ENCODE measurements at regions of chr11 and their contacts with region 1.

Region 1: GRCh38 chr11:120335908-120336640 is at the start of gene ARHGEF12:
- DNase-seq: peak; percentile 97
- H3K4me3 ChIP-seq: peak within 1 kb of the TSS; percentile 87
- H3K27ac ChIP-seq: peak within 1 kb of the TSS; percentile 90
- H3K27me3 ChIP-seq: no peaks in the 10 kb centered on the region
- CTCF ChIP-seq: peak; percentile 47
- polyA plus RNA-seq, gene ARHGEF12: 62.7 and 64.8 TPM in 2 replicates

Region 2: DNA sequence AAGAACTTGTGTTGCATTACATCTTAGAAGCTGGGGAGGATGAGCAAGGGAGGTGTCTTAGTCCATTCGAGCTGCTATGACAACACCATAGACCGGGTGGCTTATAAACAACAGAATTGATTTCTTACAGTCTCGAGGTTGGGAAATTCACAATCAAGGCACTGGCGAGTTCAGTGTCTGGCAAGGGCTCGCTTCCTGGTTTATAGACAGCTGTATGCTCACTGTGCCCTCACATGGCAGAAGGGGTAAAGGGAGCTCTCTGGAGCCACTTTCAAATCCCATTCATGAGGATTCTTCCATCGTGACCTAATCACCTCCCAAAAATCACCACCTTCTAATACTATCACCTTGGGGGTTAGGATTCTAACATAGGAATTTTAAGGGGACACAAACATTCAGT is 457.1 kb before region 1 on chr11:
- CTCF ChIA-PET with region 1: no interaction called
- POLR2A ChIA-PET with region 1: no interaction called
- DNase-seq: no peak
- H3K4me3 ChIP-seq: no peak overlapping the region
- H3K27ac ChIP-seq: no peak overlapping the region
- H3K27me3 ChIP-seq: peaks cover 14% of the 10 kb centered on the region
- CTCF ChIP-seq: no peak

Region 3: DNA sequence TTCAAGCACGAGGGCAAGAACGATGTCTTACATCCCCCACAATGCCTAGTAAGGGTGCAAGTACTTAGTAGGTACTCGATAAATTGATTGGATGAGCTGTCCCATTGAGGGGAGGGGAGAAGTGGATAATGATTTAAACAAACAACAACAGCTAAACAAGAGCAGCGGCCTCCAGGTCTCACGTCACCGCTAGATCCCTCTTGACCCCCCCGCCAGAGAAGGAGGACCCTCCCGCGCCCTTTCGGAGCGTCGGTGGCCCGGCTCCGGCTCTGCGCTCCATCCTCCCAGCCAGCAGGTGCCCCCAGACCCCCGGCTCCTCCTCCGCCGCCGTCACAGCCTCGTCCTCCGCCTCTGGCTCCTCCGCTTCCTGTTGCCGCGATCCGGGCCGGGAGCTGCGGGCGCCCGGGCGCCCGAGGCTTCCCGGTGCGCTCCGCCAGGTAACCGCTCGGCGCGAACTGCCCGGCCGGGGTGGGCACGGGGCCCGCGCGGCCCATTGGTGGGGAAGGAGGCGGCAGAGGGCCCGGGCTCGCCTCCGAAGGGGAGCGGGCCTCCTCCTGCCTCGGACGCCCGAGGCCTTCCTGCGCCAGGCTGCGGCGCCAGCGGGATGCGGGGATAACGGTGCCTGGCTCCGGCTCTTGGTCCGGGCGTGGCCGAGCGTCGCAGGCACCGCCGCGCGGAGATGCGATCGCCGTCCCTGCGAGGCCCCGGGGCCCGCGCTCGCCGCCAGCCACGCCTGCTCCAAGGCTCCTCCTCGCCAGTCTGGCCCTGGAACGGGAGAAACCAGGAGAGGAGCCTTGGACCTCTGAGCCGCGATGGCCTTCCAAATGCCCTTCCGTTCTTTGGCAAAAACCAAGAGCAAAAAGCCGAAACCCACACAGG is 10.9 kb before region 1 on chr11 and contains the start of gene TLCD5:
- CTCF ChIA-PET with region 1: interaction called, 23 read pairs
- POLR2A ChIA-PET with region 1: interaction called, 3 read pairs
- DNase-seq: no peak
- H3K4me3 ChIP-seq: peak within 1 kb of the TSS; percentile 70
- H3K27ac ChIP-seq: peak within 1 kb of the TSS; percentile 83
- H3K27me3 ChIP-seq: no peaks in the 10 kb centered on the region
- CTCF ChIP-seq: peak; percentile 15; the same call in 1 of the 2 replicates
- polyA plus RNA-seq, gene TLCD5: 13.6 and 14.9 TPM in 2 replicates

Region 4: DNA sequence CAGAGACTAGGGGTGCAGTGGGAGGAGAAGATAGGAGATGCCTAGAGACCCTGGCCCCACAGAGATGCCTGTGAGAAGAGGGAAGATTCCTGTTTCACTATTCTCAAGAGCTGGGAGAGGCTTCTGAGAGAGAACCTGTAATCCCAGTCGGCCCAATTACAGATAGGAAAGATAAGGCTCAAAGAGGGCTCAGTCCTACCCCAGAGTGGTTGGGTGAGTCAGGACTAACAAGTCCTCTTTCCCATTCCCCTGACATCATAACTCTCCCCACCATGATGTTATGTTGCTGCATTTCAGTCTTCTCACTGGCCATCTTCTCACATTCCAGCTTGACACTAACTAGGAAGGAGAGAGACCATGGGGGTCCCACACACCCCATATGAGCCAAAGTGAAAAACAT is 18.0 kb after region 1 on chr11:
- CTCF ChIA-PET with region 1: interaction called, 10 read pairs
- POLR2A ChIA-PET with region 1: interaction called, 4 read pairs
- DNase-seq: no peak
- H3K4me3 ChIP-seq: no peak overlapping the region
- H3K27ac ChIP-seq: no peak overlapping the region
- H3K27me3 ChIP-seq: no peaks in the 10 kb centered on the region
- CTCF ChIP-seq: no peak

Region 5: DNA sequence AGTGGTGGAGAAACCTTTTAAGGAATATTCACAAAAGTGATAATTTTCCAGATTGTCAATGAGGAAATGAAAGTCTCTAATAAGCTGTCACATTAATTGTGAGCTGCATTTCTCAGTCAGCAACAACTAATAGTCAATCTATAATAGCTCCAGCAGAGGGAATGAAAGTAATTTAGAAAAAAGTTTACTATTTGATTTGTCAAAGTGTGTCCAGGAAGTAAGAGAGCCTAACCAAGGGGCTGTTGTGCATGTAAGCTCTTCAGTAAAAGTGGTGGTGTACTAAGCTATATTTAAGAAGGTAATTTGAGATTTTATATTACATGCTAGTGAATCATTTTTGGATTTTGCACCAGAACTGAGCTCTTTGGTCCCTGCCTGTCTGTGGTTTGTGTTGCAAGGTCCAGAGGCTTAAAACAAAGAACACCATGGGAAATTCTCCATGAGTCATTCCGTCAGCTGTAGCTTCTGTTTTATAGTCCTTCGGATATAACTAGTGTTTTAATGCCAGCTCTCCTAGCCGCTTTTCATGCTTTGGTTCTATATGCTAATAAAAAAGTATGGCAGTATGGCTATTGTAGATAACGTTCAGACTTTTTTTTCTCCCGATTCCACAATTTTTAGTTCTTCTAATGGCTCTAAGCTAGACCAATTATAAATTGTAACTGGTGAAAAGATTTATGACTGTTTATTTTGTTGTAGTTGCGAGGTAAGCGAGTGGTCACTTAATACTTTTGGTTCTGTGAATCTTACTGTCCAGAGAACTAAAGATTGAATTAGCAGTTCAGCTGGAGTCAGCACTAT is 64.7 kb after region 1 on chr11:
- CTCF ChIA-PET with region 1: interaction called, 9 read pairs
- POLR2A ChIA-PET with region 1: interaction called, 12 read pairs
- DNase-seq: peak; percentile 94
- H3K4me3 ChIP-seq: peak overlapping the region; percentile 47
- H3K27ac ChIP-seq: no peak overlapping the region
- H3K27me3 ChIP-seq: no peaks in the 10 kb centered on the region
- CTCF ChIP-seq: no peak

Region 6: DNA sequence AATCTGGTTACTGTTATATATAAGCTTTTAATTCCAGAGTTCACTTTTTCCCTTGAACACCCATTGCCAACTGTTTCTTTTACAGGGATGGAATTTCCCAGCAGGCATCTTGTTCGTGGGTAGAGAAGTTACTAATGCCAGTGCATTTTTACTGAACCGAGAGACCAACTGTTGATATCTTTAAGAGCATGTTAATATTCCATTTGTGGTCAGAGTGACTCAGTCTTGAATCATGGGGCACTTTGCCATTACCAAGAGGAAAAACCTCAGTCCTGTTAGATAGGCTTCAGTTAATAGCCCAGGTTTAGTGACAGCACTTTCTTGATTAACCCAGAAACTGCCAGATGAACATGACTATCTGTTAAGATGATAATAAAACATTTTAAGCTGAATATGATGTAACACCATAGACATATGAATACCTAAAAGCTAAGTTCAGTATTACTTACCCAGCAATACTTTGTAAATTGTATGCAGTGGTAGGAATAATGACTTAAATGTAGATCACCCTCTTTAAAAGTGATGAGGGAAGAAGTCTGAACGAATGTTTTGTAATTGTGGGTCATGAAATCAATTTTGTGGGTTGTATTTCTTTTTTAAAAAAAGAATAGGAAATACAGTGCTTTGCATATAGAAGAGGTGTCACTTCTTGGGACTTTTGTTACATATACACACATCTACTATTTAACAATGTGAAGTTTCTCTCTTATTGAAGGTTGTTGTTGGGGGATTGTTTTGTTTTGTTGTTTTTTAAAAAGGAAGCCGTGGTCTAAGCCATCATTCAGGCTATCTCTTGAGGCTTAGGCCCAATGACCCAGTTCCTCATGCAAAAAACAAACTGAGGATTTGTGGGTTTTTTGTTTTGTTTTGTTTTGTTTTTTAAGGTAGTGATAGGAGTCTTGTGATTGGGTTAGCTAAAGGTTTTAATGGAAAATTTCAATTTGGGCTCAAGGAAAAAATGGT is 96.3 kb after region 1 on chr11:
- CTCF ChIA-PET with region 1: interaction called, 7 read pairs
- POLR2A ChIA-PET with region 1: interaction called, 15 read pairs
- DNase-seq: peak; percentile 95
- H3K4me3 ChIP-seq: no peak overlapping the region
- H3K27ac ChIP-seq: peak overlapping the region; percentile 89
- H3K27me3 ChIP-seq: no peaks in the 10 kb centered on the region
- CTCF ChIP-seq: no peak